ENCODE measurements at regions of chr17 and their contacts with region 1.

Region 1: DNA sequence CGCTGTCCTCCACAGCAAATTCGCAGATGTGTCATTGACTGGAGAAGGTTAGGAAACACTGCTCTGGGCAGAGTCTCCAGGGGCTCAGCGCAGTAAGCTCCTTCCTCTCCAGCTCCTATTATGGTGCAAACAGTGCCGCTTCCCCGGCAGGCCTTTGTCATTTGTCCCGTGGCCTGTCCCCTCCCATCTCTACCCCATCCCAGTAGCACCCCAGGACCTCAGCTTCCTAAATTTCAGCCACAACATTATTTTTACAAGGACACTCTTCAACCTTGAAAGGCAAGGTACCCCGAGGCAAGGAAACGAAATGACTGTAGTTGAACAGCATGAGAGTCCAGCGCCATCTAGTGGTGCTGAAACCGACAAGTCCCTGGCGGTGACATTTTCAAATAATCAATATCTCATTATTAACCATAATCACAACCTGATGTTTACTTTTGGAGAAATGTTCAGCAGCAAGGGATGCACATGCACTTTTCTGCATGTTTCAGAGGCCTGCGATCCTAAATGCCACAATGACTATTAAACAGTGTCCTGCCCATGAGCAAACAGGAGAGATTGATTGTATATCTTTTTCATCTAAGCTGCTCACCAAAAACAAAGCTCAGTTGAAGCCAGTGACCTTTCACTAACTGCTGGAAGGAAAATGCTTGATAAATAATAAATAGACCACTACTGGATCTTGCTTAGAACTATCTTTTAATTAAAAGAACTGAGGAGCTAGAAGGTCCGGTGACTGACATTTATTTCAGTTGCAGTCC is 16.5 kb downstream of the MRPS23 start:
- H3K4me3 Mint-ChIP-seq: no peak overlapping the region
- H3K27ac Mint-ChIP-seq: no peak overlapping the region
- H3K4me1 Mint-ChIP-seq: no peaks in the 10 kb centered on the region
- H3K27me3 Mint-ChIP-seq: peaks cover 1% of the 10 kb centered on the region

Region 2: DNA sequence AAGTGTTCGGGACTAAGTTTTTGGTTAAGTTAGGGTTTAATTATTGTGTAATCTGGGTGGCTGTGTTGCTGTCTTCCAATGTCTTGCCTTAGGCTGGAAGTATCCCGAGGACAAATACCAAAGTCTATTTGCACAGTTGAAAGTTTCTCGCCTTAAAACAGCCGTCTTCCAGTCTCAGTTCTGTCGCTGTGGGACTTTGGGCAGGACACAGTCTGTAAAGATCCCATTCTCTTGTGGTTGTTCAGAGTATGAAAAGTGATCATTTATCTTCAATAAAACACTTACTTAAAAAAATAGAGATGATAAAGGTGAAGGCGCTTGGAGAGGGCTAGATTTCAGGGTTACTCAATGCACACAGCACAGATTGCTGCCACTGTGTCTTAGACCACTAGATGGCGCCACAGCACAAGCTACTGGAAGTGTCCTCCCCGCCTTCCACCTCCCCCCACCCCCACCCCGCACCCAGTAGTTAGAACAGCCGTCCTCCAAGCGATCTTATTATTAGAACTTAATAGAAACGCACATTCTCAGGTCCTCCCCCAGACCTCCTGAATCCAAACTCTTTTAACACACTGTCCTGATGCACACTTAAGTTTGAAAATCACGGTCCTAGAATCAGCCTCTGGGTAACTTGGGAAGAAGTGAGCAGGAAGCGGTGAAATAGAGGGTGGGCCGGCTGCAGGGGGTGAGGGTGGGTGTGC is 702.4 kb before region 1 on chr17:
- intact Hi-C with region 1: loop called (anchors 10 kb)
- H3K4me3 Mint-ChIP-seq: no peak overlapping the region
- H3K27ac Mint-ChIP-seq: no peak overlapping the region
- H3K4me1 Mint-ChIP-seq: peaks cover 6% of the 10 kb centered on the region
- H3K27me3 Mint-ChIP-seq: peaks cover 15% of the 10 kb centered on the region

Region 3: GRCh38 chr17:57243171-57243948 is 590.0 kb before region 1 on chr17:
- intact Hi-C with region 1: loop called (anchors 5 kb)
- H3K4me3 Mint-ChIP-seq: no peak overlapping the region
- H3K27ac Mint-ChIP-seq: no peak overlapping the region
- H3K4me1 Mint-ChIP-seq: no peaks in the 10 kb centered on the region
- H3K27me3 Mint-ChIP-seq: peaks cover 4% of the 10 kb centered on the region

Region 4: DNA sequence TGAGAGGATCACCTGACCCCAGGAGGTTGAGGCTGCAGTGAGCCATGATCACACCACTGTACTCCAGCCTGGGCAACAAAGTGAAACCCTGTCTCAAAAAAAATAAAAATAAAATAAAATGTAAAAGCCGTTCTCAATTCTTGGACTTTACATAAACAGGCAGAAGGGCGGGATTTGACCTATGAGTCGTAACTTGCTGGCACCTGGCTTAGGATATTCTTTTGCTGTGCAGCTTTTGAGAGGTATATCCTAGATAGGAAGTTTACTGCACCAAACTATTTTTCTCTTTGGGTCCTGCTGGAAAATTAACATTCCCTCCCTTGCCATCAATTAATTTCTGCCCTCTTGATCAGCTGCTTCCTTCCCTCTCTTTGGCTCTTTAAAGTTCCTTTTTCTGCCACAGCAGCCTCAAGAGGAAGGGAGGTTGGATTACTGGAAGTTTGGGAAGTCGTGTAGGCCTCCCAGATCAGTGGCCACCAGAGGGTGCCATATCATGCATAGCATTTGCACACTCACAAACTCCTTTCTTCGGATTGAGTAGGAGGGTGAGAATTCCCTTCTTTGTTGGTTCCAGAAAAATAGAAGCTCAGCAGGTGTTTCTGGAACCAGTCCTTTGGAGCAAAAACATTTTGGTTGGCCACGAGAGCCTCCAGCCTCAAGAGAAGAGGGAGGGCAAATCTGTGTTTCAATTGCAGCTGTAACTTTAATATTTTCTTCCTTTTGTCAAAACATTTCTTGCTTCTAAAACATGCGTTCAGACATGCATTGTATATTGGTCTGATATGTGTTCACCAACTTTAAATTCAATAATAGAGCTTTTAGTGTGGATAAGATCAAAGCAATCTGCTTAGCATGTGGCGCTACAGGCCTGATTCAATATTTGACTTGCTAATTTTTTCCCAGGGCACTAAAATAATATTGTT is 235.6 kb before region 1 on chr17:
- intact Hi-C with region 1: loop called (anchors 10 kb)
- H3K4me3 Mint-ChIP-seq: no peak overlapping the region
- H3K27ac Mint-ChIP-seq: no peak overlapping the region
- H3K4me1 Mint-ChIP-seq: peaks cover 39% of the 10 kb centered on the region
- H3K27me3 Mint-ChIP-seq: no peaks in the 10 kb centered on the region

Measured in dendritic cell treated with granulocyte-macrophage colony-stimulating factor and Interleukin-4, amounts not matched to agents 40 ng/mL and 50 ng/mL, for 4 days (primary cell).